Calu3 (cell line): ENCODE measurements at regions of chr2 and their contacts with region 1.

Region 1: DNA sequence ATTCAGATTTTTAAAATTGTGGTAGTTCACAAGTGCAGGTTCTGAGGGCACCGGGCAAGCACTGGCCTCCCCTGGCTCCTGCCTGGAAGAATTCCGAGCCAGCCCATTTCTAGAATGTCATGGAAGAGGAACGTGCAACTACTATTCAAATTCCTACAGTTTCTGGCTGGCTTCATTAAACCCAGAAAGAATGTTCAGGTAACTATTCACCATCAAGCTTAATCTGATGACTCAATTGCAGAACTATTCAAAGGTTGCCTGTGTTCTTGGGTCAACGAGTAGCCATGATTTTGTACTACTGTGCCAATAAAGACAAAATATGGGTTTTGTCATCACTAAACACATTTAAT is 14.3 kb upstream of the MFF start:
- DNase-seq: peak; percentile 11
- H3K4me3 Mint-ChIP-seq: no peak overlapping the region
- H3K27ac Mint-ChIP-seq: peak overlapping the region; percentile 33
- H3K4me1 Mint-ChIP-seq: peaks cover 10% of the 10 kb centered on the region
- H3K27me3 Mint-ChIP-seq: no peaks in the 10 kb centered on the region
- CTCF ChIP-seq: no peak

Region 2: DNA sequence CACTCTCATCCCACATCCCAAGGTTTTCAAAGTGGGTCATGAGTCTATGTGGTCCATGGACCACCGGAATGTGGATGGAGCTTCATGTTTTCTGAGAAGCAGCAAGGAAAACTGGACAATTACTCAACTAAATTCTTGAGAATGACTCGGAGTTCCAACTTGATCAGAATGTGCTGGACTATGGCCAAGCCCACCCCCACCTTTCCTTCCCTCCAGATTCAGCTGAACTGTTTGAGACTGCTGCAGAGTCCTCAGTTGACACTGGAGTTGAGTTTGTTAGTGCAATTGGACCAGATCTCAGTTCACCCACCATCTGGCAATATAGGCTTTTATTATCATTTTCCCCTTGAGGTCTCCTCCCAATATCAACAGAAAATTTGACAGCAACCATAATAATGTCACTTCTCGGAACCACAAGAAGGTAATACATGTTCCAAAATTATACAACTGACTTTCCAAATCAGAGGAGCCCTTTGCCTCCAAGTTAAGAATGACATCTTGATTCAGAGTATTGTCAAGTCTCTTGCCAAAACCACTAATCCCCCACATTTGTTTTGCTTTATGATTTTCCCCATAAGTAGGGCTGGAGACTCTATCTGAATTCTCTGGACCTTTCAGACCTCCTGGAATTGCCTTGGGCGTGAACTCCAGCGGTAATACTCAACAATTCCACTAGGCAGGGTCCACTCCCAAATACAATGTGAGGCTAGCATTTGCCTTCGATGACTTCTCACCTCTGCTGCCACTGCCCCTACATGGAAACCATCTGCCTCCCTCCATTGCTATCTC is 155.5 kb before region 1 on chr2:
- CTCF ChIA-PET with region 1: no interaction called
- intact Hi-C with region 1: loop called (anchors 10 kb)
- DNase-seq: no peak
- H3K4me3 Mint-ChIP-seq: no peak overlapping the region
- H3K27ac Mint-ChIP-seq: no peak overlapping the region
- H3K4me1 Mint-ChIP-seq: peaks cover 41% of the 10 kb centered on the region
- H3K27me3 Mint-ChIP-seq: no peaks in the 10 kb centered on the region
- CTCF ChIP-seq: no peak

Region 3: DNA sequence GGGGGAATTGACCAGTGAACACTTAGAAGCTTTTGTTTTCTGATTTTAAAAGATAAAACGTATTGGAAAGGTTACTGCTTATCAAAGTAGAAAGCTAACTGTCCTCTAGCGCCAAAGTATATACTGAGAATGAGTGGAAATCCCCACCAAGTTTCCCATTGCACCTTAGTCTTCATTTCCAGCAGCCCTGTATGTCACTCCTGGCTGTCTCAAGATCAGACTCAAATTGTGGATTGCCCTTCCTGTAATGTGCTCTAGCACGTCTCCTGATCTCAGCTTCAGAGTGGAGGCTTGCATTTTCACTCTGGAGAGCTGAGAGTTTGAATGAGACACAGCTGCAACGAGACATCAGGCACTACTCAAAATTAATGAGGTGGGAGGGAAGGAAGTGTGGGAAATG is 40.9 kb after region 1 on chr2:
- CTCF ChIA-PET with region 1: no interaction called
- intact Hi-C with region 1: no loop called
- DNase-seq: no peak
- H3K4me3 Mint-ChIP-seq: no peak overlapping the region
- H3K27ac Mint-ChIP-seq: no peak overlapping the region
- H3K4me1 Mint-ChIP-seq: no peaks in the 10 kb centered on the region
- H3K27me3 Mint-ChIP-seq: no peaks in the 10 kb centered on the region
- CTCF ChIP-seq: no peak